ENCODE measurements at regions of chr10 and their contacts with region 1.

Region 1: GRCh38 chr10:114304017-114304570 is 65.0 kb downstream of the VWA2 start:
- DNase-seq: peak in 4 of 5 donors; percentile 82 to 87 (median 85)
- ATAC-seq: peak; percentile 79 to 89 (median 85)
- H3K4me3 ChIP-seq: peak overlapping the region in 11 of 12 donors; percentile 11 to 60 (median 46)
- H3K27ac ChIP-seq: peak overlapping the region in 11 of 12 donors; percentile 8 to 71 (median 52)
- H3K4me1 ChIP-seq: peaks cover 0 to 47% (median 13%) of the 10 kb centered on the region in 12 donors
- H3K27me3 ChIP-seq: no peaks in the 10 kb centered on the region
- CTCF ChIP-seq: peak; percentile 56 to 91 (median 79)
- POLR2A ChIP-seq: no peak

Region 2: GRCh38 chr10:114403541-114404161 is 99.6 kb after region 1 on chr10:
- intact Hi-C with region 1: loop called in 5 of 10 experiments (anchors 5 to 10 kb)
- DNase-seq: peak in 4 of 5 donors; percentile 55 to 74 (median 58)
- ATAC-seq: peak; percentile 44 to 71 (median 59)
- H3K4me3 ChIP-seq: peak overlapping the region; percentile 52 to 71 (median 61)
- H3K27ac ChIP-seq: peak overlapping the region; percentile 37 to 76 (median 68)
- H3K4me1 ChIP-seq: peaks cover 4 to 66% (median 27%) of the 10 kb centered on the region in 12 donors
- H3K27me3 ChIP-seq: peaks cover 0 to 39% (median 5%) of the 10 kb centered on the region in 9 donors
- CTCF ChIP-seq: peak in 9 of 12 donors; percentile 11 to 50 (median 31)
- POLR2A ChIP-seq: no peak

Region 3: GRCh38 chr10:114427124-114427852 is 123.2 kb after region 1 on chr10:
- intact Hi-C with region 1: loop called in 5 of 10 experiments (anchors 5 kb)
- DNase-seq: no peak
- ATAC-seq: peak; percentile 29 to 59 (median 38)
- H3K4me3 ChIP-seq: no peak overlapping the region
- H3K27ac ChIP-seq: peak overlapping the region in 11 of 12 donors; percentile 27 to 77 (median 55)
- H3K4me1 ChIP-seq: peaks cover 0 to 30% (median 13%) of the 10 kb centered on the region in 12 donors
- H3K27me3 ChIP-seq: no peaks in the 10 kb centered on the region
- CTCF ChIP-seq: peak in 6 of 12 donors; percentile 16 to 44 (median 24)
- POLR2A ChIP-seq: no peak

Region 4: DNA sequence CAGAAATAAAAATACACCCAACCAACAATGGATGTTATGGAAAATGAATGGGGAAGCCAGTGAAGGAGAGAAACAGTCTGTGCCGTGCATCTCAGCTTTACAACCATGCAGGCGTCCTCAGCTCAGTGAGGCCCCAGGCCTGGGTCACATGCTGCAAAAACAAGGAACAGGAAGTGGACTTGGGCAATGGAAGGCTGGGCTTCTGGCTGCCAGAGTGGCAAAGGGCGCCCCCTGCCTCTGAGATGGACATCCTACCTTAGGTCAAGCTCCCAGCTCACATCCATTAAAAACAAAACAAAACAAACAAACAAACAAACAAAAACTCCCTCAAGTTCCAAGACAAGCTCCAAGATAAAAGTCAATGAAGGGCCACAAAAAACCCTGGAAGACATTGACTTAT is 154.9 kb after region 1 on chr10:
- intact Hi-C with region 1: loop called in 1 of 10 experiments (anchors 5 kb)
- DNase-seq: peak in 3 of 5 donors; percentile 37 to 70 (median 47)
- ATAC-seq: peak; percentile 28 to 63 (median 40)
- H3K4me3 ChIP-seq: no peak overlapping the region
- H3K27ac ChIP-seq: no peak overlapping the region
- H3K4me1 ChIP-seq: peaks cover 0 to 2% (median 0%) of the 10 kb centered on the region in 12 donors
- H3K27me3 ChIP-seq: no peaks in the 10 kb centered on the region
- CTCF ChIP-seq: peak in 10 of 12 donors; percentile 17 to 49 (median 36)
- POLR2A ChIP-seq: no peak

Region 5: DNA sequence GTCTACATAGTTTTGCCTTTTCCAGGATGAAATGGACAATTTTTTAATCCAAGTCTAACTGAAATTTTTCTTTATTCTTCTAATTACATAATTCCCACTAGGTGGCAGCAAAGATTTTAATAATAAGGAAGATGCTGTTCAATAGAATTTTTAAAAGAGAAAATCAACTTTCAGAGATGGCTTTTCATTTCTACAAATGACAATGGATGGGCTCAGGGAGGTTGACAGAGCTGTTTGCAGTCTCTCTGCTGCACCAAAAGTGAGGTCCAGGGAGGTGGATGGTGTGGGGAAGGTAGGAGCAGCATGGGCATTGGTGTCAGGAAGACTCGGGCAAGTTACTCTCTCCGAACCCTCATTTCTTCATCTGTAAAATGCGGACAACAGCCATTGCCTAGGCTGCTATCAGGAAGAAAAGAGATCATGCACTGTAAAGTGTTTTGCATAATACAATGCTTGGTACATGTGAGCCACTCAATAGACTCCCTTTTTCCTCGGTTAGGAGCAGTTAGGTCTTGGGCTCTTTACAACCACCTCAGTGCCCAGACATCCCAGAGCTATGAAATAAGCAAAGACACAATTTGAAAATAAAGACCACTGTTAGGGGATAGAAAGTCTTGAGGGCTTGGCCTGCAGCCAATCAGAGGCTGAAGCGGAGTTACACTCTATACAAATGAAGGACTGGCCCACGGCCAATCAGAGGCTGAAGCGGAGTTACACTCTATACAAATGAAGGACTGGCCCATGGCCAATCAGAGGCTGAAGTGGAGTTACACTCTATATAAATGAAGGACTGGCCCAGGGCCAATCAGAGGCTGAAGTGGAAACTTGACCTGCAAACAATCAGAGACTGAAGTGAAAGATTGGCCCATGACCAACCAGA is 246.9 kb after region 1 on chr10:
- intact Hi-C with region 1: loop called in 4 of 10 experiments (anchors 10 kb)
- DNase-seq: peak; percentile 58 to 82 (median 72)
- ATAC-seq: peak; percentile 4 to 52 (median 49)
- H3K4me3 ChIP-seq: peak overlapping the region in 7 of 12 donors; percentile 3 to 33 (median 26)
- H3K27ac ChIP-seq: peak overlapping the region; percentile 59 to 89 (median 74)
- H3K4me1 ChIP-seq: peaks cover 0 to 93% (median 53%) of the 10 kb centered on the region in 12 donors
- H3K27me3 ChIP-seq: no peaks in the 10 kb centered on the region
- CTCF ChIP-seq: peak; percentile 25 to 67 (median 54)
- POLR2A ChIP-seq: no peak

Region 6: DNA sequence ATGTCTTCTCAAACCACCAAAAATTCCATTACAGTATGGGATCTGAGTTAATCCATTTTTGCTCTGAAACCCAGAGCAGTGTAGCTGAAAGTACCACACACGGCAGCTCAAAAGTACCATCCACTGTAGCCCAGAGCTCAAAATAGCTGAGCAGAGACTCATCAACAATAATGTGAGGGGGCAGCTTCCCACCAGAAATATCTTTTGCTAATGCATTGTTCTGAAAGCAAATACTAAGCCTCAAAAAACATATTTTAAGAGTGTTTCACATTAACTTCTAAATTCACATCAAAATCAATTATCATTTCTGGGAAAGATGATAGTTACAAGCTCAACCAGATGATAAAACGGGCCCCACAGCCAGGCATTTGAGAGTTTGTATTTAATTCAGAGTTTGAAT is 280.3 kb after region 1 on chr10:
- intact Hi-C with region 1: no loop called
- DNase-seq: no peak
- ATAC-seq: peak in 2 of 4 donors; percentile 32
- H3K4me3 ChIP-seq: no peak overlapping the region
- H3K27ac ChIP-seq: peak overlapping the region in 4 of 12 donors; percentile 2 to 25 (median 14)
- H3K4me1 ChIP-seq: peaks cover 0 to 74% (median 32%) of the 10 kb centered on the region in 12 donors
- H3K27me3 ChIP-seq: no peaks in the 10 kb centered on the region
- CTCF ChIP-seq: no peak
- POLR2A ChIP-seq: no peak

Region 7: DNA sequence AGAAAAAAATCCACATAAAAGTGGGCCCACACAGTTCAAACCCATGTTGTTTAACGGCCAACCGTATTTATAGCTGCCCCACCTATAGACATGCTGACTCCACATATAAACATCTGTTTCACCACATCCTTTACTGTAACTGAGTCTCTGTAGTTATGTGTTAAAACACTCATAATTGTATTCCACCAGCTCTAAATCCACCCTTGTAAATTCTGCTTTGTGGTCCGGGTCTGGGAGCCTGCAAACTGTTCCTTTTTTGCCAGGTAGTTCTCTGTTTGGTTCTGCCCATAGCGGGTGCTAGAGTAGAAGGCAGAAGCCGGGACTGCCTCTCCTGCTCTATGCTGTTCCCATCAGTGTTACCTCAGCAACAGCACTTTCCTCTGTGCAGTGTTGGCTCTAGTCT is 497.3 kb after region 1 on chr10:
- intact Hi-C with region 1: loop called in 2 of 10 experiments (anchors 10 kb)
- DNase-seq: no peak
- ATAC-seq: peak; percentile 78 to 84 (median 80)
- H3K4me3 ChIP-seq: no peak overlapping the region
- H3K27ac ChIP-seq: no peak overlapping the region
- H3K4me1 ChIP-seq: no peaks in the 10 kb centered on the region
- H3K27me3 ChIP-seq: no peaks in the 10 kb centered on the region
- CTCF ChIP-seq: no peak
- POLR2A ChIP-seq: no peak

Measured in heart left ventricle (tissue), 16 donors.